Activated CD4-positive, alpha-beta T cell treated with anti-CD3 and anti-CD28 coated beads for 36 hours (primary cell): ENCODE measurements at regions of chr17 and their contacts with region 1.

Region 1: DNA sequence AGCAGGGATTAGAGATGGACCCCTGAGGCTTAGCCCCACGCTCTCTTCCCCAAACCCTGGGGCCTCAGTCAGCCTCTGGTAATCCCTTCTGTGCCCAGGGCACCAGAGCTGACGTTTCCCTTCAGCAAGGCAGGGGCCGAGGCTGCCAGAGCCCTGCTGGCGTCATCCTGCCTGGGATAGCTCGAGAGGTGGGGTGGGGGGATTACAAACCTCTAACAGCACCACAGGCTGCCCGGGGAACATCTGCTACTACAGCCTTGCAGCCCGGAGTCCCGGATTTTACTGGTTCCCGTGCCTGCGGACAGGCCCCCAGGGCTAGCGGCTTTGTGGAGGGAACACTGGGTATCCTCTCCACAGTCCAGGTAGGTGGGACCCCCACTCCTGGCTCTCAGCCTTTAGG is at the start of gene AANAT:
- DNase-seq: no peak
- ATAC-seq: no peak
- H3K4me3 Mint-ChIP-seq: no peak within 1 kb of the TSS
- H3K27ac Mint-ChIP-seq: no peak within 1 kb of the TSS
- H3K4me1 Mint-ChIP-seq: no peaks in the 10 kb centered on the region
- H3K27me3 Mint-ChIP-seq: no peaks in the 10 kb centered on the region
- total RNA-seq, gene AANAT: 0.16 TPM in 1 of 2 experiments, not detected in the other

Region 2: DNA sequence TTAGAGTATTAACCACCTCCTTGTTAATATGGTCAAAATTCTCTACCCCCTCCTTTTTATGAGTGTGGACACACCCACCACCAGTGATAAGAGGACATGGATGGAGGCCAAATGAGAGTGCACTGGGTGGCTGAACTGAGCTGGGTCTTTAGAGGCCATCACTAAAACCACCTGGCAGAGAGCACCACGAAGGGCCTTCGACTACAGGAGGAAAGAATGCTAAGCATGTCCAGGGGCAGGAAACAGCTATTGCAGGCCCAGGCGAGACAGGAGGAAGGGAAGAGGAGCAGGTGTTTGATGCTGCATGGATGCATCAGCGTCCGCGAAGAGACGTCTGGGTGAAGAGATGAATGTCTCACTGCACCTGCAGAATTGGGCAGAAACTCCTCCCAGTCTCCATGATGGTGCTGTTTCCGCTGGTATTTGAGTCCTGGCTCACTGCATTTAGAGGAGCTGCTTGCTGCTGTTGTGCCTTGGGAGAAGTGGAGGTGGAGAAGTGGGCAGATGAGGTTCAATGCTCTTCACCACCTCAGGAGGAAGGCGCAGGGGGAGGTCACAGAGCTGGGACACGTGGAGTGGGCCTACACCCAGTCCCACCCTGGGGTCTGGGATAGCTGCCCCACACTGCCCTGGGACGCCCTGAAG is 49.7 kb before region 1 on chr17:
- CTCF ChIA-PET with region 1: no interaction called
- POLR2A ChIA-PET with region 1: no interaction called
- intact Hi-C with region 1: no loop called
- DNase-seq: no peak
- ATAC-seq: no peak
- H3K4me3 Mint-ChIP-seq: no peak overlapping the region
- H3K27ac Mint-ChIP-seq: peak overlapping the region; percentile 13
- H3K4me1 Mint-ChIP-seq: peaks cover 18% of the 10 kb centered on the region
- H3K27me3 Mint-ChIP-seq: no peaks in the 10 kb centered on the region

Region 3: GRCh38 chr17:76492989-76493501 is 25.7 kb after region 1 on chr17:
- CTCF ChIA-PET with region 1: interaction called, 10 read pairs
- POLR2A ChIA-PET with region 1: no interaction called
- intact Hi-C with region 1: no loop called
- DNase-seq: peak; percentile 78
- ATAC-seq: peak; percentile 80
- H3K4me3 Mint-ChIP-seq: peak overlapping the region; percentile 48
- H3K27ac Mint-ChIP-seq: peak overlapping the region; percentile 81
- H3K4me1 Mint-ChIP-seq: peaks cover 34% of the 10 kb centered on the region
- H3K27me3 Mint-ChIP-seq: no peaks in the 10 kb centered on the region

Region 4: GRCh38 chr17:76501018-76501826 is 33.9 kb after region 1 on chr17 and contains the start of gene RHBDF2:
- CTCF ChIA-PET with region 1: interaction called, 26 read pairs
- POLR2A ChIA-PET with region 1: interaction called, 3 read pairs
- intact Hi-C with region 1: loop called (anchors 1 kb)
- DNase-seq: peak; percentile 98
- ATAC-seq: peak; percentile 91
- H3K4me3 Mint-ChIP-seq: peak within 1 kb of the TSS; percentile 87
- H3K27ac Mint-ChIP-seq: peak within 1 kb of the TSS; percentile 94
- H3K4me1 Mint-ChIP-seq: peaks cover 29% of the 10 kb centered on the region
- H3K27me3 Mint-ChIP-seq: no peaks in the 10 kb centered on the region
- total RNA-seq, gene RHBDF2: 23.9 to 28.4 TPM

Region 5: GRCh38 chr17:76700617-76701470 is 233.5 kb after region 1 on chr17:
- CTCF ChIA-PET with region 1: no interaction called
- POLR2A ChIA-PET with region 1: no interaction called
- intact Hi-C with region 1: no loop called
- DNase-seq: no peak
- ATAC-seq: no peak
- H3K4me3 Mint-ChIP-seq: no peak overlapping the region
- H3K27ac Mint-ChIP-seq: no peak overlapping the region
- H3K4me1 Mint-ChIP-seq: peaks cover 6% of the 10 kb centered on the region
- H3K27me3 Mint-ChIP-seq: no peaks in the 10 kb centered on the region